CD4-positive, alpha-beta T cell (primary cell): ENCODE measurements at regions of chr5 and their contacts with region 1.

Region 1: DNA sequence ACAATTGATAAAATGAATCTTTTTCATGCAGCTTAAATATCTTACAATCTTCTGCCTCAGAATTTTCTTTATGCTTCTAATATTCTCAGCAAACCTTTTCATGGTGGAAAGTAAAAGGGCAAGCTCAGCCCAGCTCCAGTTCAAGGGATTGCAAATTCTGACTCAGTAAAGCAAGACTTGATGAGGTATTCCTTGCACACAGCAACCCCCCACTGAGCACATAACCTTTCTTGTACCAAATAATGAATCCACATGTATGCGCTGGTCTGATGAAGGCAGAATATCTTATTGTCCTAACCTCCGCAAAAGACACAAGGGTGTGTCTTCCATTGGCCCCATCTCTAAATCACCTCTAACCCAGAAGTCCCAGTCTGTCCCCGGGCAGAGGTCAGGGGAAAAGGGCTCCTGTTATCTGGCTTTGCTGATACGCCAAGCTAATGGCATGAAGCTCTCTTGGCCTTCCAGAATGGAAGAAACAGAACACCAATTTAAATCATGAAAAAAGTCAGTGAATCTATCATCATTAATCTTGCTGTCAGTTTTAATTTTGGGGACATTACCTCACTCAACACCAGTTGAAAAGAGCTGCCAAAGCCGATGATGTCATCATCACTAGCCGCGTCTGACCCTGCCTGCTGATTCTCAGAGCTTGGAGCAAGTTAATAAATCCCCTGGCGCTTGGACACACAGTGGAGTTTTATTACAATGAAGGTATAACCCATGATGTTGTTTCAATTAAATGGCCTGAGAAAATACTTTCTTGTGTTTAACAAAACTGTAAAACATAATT is 592.5 kb upstream of the CLINT1 start:
- DNase-seq: no peak
- ATAC-seq: no peak
- H3K4me3 ChIP-seq: no peak overlapping the region
- H3K4me3 Mint-ChIP-seq: no peak overlapping the region
- H3K27ac ChIP-seq: no peak overlapping the region
- H3K27ac Mint-ChIP-seq: no peak overlapping the region
- H3K4me1 ChIP-seq: no peaks in the 10 kb centered on the region
- H3K4me1 Mint-ChIP-seq: no peaks in the 10 kb centered on the region
- H3K27me3 ChIP-seq: no peaks in the 10 kb centered on the region
- H3K27me3 Mint-ChIP-seq: no peaks in the 10 kb centered on the region
- CTCF ChIP-seq: no peak

Region 2: DNA sequence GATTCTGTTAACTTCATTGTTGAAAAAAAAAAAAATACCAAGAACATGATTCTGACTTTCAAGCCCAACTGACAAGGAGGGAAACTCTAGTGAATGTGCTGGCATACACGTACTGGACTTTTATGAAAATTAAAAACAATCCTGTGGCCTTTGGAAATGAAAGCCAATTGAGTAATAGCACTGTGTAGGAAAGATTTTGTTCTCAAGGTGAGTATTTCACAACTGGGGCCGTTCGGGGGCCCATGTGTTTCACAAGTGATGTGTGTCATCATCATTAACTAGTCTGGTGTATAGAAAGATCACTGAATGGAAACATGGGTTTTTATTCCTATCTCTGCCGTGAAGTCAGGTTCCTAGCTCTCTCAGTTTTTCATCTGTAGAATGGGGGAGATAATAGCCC is 12.5 kb after region 1 on chr5:
- CTCF ChIA-PET with region 1: no interaction called
- POLR2A ChIA-PET with region 1: no interaction called
- intact Hi-C with region 1: no loop called
- DNase-seq: peak in 1 of 14 experiments; percentile 2
- ATAC-seq: no peak
- H3K4me3 ChIP-seq: no peak overlapping the region
- H3K4me3 Mint-ChIP-seq: no peak overlapping the region
- H3K27ac ChIP-seq: no peak overlapping the region
- H3K27ac Mint-ChIP-seq: no peak overlapping the region
- H3K4me1 ChIP-seq: no peaks in the 10 kb centered on the region
- H3K4me1 Mint-ChIP-seq: no peaks in the 10 kb centered on the region
- H3K27me3 ChIP-seq: no peaks in the 10 kb centered on the region
- H3K27me3 Mint-ChIP-seq: no peaks in the 10 kb centered on the region
- CTCF ChIP-seq: no peak

Region 3: GRCh38 chr5:158499075-158499891 is 47.9 kb after region 1 on chr5:
- CTCF ChIA-PET with region 1: no interaction called
- POLR2A ChIA-PET with region 1: no interaction called
- intact Hi-C with region 1: loop called in 1 of 2 experiments (anchors 2 kb)
- DNase-seq: no peak
- ATAC-seq: no peak
- H3K4me3 ChIP-seq: no peak overlapping the region
- H3K4me3 Mint-ChIP-seq: no peak overlapping the region
- H3K27ac ChIP-seq: no peak overlapping the region
- H3K27ac Mint-ChIP-seq: no peak overlapping the region
- H3K4me1 ChIP-seq: no peaks in the 10 kb centered on the region
- H3K4me1 Mint-ChIP-seq: no peaks in the 10 kb centered on the region
- H3K27me3 ChIP-seq: no peaks in the 10 kb centered on the region
- H3K27me3 Mint-ChIP-seq: no peaks in the 10 kb centered on the region
- CTCF ChIP-seq: no peak

Region 4: DNA sequence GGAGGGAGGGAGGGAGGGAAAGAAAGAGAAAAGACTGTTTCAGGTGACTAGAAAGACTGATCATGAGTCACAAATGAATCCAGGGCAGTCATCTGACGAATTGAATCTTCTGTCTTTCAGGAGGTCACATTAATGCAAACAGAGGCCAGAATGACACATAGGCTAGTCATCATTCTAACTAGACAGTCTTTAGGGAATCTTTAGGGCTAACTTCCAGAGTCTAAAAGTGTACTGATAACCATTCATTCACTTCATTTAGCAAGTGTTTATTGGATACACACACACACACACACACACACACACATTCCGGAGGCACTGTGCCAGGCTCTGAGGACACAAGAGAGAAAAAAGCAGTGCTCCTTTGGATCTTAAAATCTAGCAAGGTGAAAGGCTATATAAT is 491.7 kb after region 1 on chr5:
- CTCF ChIA-PET with region 1: no interaction called
- POLR2A ChIA-PET with region 1: no interaction called
- intact Hi-C with region 1: no loop called
- DNase-seq: no peak
- ATAC-seq: no peak
- H3K4me3 ChIP-seq: no peak overlapping the region
- H3K4me3 Mint-ChIP-seq: no peak overlapping the region
- H3K27ac ChIP-seq: no peak overlapping the region
- H3K27ac Mint-ChIP-seq: no peak overlapping the region
- H3K4me1 ChIP-seq: no peaks in the 10 kb centered on the region
- H3K4me1 Mint-ChIP-seq: no peaks in the 10 kb centered on the region
- H3K27me3 ChIP-seq: no peaks in the 10 kb centered on the region
- H3K27me3 Mint-ChIP-seq: peaks cover 2% of the 10 kb centered on the region
- CTCF ChIP-seq: no peak